Naive thymus-derived CD4-positive, alpha-beta T cell (primary cell): ENCODE measurements at regions of chr6 and their contacts with region 1.

Region 1: DNA sequence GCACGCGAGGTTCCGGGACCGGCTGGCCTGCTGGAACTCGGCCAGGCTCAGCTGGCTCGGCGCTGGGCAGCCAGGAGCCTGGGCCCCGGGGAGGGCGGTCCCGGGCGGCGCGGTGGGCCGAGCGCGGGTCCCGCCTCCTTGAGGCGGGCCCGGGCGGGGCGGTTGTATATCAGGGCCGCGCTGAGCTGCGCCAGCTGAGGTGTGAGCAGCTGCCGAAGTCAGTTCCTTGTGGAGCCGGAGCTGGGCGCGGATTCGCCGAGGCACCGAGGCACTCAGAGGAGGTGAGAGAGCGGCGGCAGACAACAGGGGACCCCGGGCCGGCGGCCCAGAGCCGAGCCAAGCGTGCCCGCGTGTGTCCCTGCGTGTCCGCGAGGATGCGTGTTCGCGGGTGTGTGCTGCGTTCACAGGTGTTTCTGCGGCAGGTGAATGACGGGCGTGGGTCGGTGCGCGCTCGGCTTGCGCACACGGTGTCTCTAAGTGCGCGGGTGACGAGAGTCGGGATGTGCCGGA is at the start of gene CDKN1A:
- DNase-seq: peak; percentile 33 to 84 (median 51)
- ATAC-seq: peak; percentile 64
- H3K4me3 ChIP-seq: peak within 1 kb of the TSS; percentile 62
- H3K4me3 Mint-ChIP-seq: peak within 1 kb of the TSS; percentile 87 to 98 (median 94)
- H3K27ac ChIP-seq: peak within 1 kb of the TSS; percentile 66
- H3K27ac Mint-ChIP-seq: peak within 1 kb of the TSS; percentile 73 to 96 (median 87)
- H3K4me1 ChIP-seq: peaks cover 19 to 29% of the 10 kb centered on the region in 2 donors
- H3K4me1 Mint-ChIP-seq: peaks cover 16 to 65% (median 30%) of the 10 kb centered on the region in 7 donors
- H3K27me3 ChIP-seq: no peaks in the 10 kb centered on the region
- H3K27me3 Mint-ChIP-seq: peaks cover 0 to 5% (median 0%) of the 10 kb centered on the region in 5 donors
- total RNA-seq, gene CDKN1A: 1.5 to 156 (median 53.6) TPM

Region 2: GRCh38 chr6:36196880-36197548 is 481.6 kb before region 1 on chr6:
- CTCF ChIA-PET with region 1: no interaction called
- POLR2A ChIA-PET with region 1: no interaction called
- intact Hi-C with region 1: loop called in 1 of 2 experiments (anchors 2 kb)
- DNase-seq: peak; percentile 94 to 100 (median 98)
- ATAC-seq: peak; percentile 96
- H3K4me3 ChIP-seq: peak overlapping the region; percentile 81
- H3K4me3 Mint-ChIP-seq: peak overlapping the region; percentile 88 to 95 (median 92)
- H3K27ac ChIP-seq: peak overlapping the region; percentile 84
- H3K27ac Mint-ChIP-seq: peak overlapping the region; percentile 69 to 96 (median 92)
- H3K4me1 ChIP-seq: peaks cover 33 to 36% of the 10 kb centered on the region in 2 donors
- H3K4me1 Mint-ChIP-seq: peaks cover 19 to 59% (median 47%) of the 10 kb centered on the region in 7 donors
- H3K27me3 ChIP-seq: no peaks in the 10 kb centered on the region
- H3K27me3 Mint-ChIP-seq: peaks cover 0 to 3% (median 0%) of the 10 kb centered on the region in 5 donors

Region 3: GRCh38 chr6:36423101-36423824 is 255.3 kb before region 1 on chr6:
- CTCF ChIA-PET with region 1: interaction called, 6 read pairs
- POLR2A ChIA-PET with region 1: interaction called, 4 read pairs
- intact Hi-C with region 1: loop called (anchors 1 to 5 kb)
- DNase-seq: peak; percentile 94 to 98 (median 97)
- ATAC-seq: peak; percentile 99
- H3K4me3 ChIP-seq: peak overlapping the region; percentile 70
- H3K4me3 Mint-ChIP-seq: peak overlapping the region; percentile 85 to 96 (median 94)
- H3K27ac ChIP-seq: peak overlapping the region; percentile 75
- H3K27ac Mint-ChIP-seq: peak overlapping the region; percentile 84 to 97 (median 93)
- H3K4me1 ChIP-seq: peaks cover 0 to 10% of the 10 kb centered on the region in 2 donors
- H3K4me1 Mint-ChIP-seq: peaks cover 10 to 21% (median 18%) of the 10 kb centered on the region in 7 donors
- H3K27me3 ChIP-seq: no peaks in the 10 kb centered on the region
- H3K27me3 Mint-ChIP-seq: no peaks in the 10 kb centered on the region

Region 4: GRCh38 chr6:36594029-36594815 is 84.4 kb before region 1 on chr6 and contains the start of gene SRSF3:
- CTCF ChIA-PET with region 1: interaction called, 6 read pairs
- POLR2A ChIA-PET with region 1: interaction called, 3 read pairs
- intact Hi-C with region 1: loop called (anchors 1 kb)
- DNase-seq: peak; percentile 87 to 99 (median 97)
- ATAC-seq: peak; percentile 95
- H3K4me3 ChIP-seq: peak within 1 kb of the TSS; percentile 85
- H3K4me3 Mint-ChIP-seq: peak within 1 kb of the TSS; percentile 90 to 99 (median 97)
- H3K27ac ChIP-seq: peak within 1 kb of the TSS; percentile 98
- H3K27ac Mint-ChIP-seq: peak within 1 kb of the TSS; percentile 97 to 100 (median 99)
- H3K4me1 ChIP-seq: peaks cover 23 to 34% of the 10 kb centered on the region in 2 donors
- H3K4me1 Mint-ChIP-seq: peaks cover 23 to 50% (median 39%) of the 10 kb centered on the region in 7 donors
- H3K27me3 ChIP-seq: no peaks in the 10 kb centered on the region
- H3K27me3 Mint-ChIP-seq: peaks cover 0 to 3% (median 0%) of the 10 kb centered on the region in 5 donors
- total RNA-seq, gene SRSF3: 317 to 510 (median 426) TPM

Region 5: GRCh38 chr6:36662827-36663362 is 15.7 kb before region 1 on chr6:
- CTCF ChIA-PET with region 1: no interaction called
- POLR2A ChIA-PET with region 1: interaction called, 3 read pairs
- intact Hi-C with region 1: loop called in 1 of 2 experiments (anchors 1 kb)
- DNase-seq: peak in 4 of 9 donors; percentile 16 to 50 (median 21)
- ATAC-seq: peak; percentile 49
- H3K4me3 ChIP-seq: no peak overlapping the region
- H3K4me3 Mint-ChIP-seq: peak overlapping the region; percentile 13 to 66 (median 50)
- H3K27ac ChIP-seq: no peak overlapping the region
- H3K27ac Mint-ChIP-seq: peak overlapping the region in 5 of 9 donors; percentile 35 to 80 (median 67)
- H3K4me1 ChIP-seq: peaks cover 0 to 17% of the 10 kb centered on the region in 2 donors
- H3K4me1 Mint-ChIP-seq: peaks cover 0 to 20% (median 16%) of the 10 kb centered on the region in 7 donors
- H3K27me3 ChIP-seq: no peaks in the 10 kb centered on the region
- H3K27me3 Mint-ChIP-seq: peaks cover 10 to 32% (median 12%) of the 10 kb centered on the region in 5 donors

Region 6: DNA sequence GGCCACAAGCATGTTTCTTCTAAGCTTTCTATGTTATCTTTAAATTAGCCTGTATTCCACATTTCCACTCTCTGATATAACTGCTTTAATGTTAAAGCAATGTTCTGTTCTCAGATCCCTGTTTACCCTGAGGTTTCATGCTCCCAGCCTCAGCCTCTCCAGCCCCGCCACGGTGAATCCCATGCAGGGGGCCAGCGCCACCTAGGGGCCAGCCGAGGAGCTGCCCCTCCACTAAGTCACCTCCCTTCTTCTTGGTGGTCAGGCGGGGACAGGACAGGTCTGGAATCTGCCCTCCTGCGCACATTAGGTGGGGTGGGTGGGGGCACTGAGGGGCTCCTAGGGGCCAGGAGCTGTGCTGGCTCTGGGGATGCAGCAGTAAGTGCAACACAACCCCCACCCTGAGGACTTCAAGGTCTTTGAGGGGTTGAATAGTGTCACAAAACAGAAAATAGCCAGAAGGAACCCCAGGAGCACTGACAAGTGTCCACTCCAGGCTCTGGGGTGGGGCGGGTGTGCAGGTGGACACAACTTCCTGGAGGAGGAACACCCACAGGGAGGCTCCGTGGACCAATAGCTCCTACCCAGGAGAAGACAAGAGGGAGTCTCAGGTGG is 80.7 kb after region 1 on chr6:
- CTCF ChIA-PET with region 1: no interaction called
- POLR2A ChIA-PET with region 1: no interaction called
- intact Hi-C with region 1: loop called (anchors 1 to 2 kb)
- DNase-seq: peak; percentile 39 to 88 (median 63)
- ATAC-seq: peak; percentile 67
- H3K4me3 ChIP-seq: no peak overlapping the region
- H3K4me3 Mint-ChIP-seq: no peak overlapping the region
- H3K27ac ChIP-seq: no peak overlapping the region
- H3K27ac Mint-ChIP-seq: peak overlapping the region in 3 of 9 donors; percentile 3 to 43 (median 25)
- H3K4me1 ChIP-seq: peaks cover 16 to 36% of the 10 kb centered on the region in 2 donors
- H3K4me1 Mint-ChIP-seq: peaks cover 17 to 51% (median 33%) of the 10 kb centered on the region in 7 donors
- H3K27me3 ChIP-seq: no peaks in the 10 kb centered on the region
- H3K27me3 Mint-ChIP-seq: peaks cover 0 to 2% (median 0%) of the 10 kb centered on the region in 5 donors